ENCODE measurements at regions of chr10 and their contacts with region 1.

Region 1: GRCh38 chr10:96017191-96017687 is 26.1 kb upstream of the CCNJ start:
- DNase-seq: peak; percentile 32
- H3K4me3 Mint-ChIP-seq: no peak overlapping the region
- H3K27ac Mint-ChIP-seq: no peak overlapping the region
- H3K4me1 Mint-ChIP-seq: no peaks in the 10 kb centered on the region
- H3K27me3 Mint-ChIP-seq: peaks cover 4% of the 10 kb centered on the region

Region 2: GRCh38 chr10:95850791-95851190 is 166.4 kb before region 1 on chr10:
- CTCF ChIA-PET with region 1: no interaction called
- POLR2A ChIA-PET with region 1: no interaction called
- DNase-seq: no peak
- H3K4me3 Mint-ChIP-seq: no peak overlapping the region
- H3K27ac Mint-ChIP-seq: no peak overlapping the region
- H3K4me1 Mint-ChIP-seq: peaks cover under 1% of the 10 kb centered on the region
- H3K27me3 Mint-ChIP-seq: peaks cover 9% of the 10 kb centered on the region

Region 3: DNA sequence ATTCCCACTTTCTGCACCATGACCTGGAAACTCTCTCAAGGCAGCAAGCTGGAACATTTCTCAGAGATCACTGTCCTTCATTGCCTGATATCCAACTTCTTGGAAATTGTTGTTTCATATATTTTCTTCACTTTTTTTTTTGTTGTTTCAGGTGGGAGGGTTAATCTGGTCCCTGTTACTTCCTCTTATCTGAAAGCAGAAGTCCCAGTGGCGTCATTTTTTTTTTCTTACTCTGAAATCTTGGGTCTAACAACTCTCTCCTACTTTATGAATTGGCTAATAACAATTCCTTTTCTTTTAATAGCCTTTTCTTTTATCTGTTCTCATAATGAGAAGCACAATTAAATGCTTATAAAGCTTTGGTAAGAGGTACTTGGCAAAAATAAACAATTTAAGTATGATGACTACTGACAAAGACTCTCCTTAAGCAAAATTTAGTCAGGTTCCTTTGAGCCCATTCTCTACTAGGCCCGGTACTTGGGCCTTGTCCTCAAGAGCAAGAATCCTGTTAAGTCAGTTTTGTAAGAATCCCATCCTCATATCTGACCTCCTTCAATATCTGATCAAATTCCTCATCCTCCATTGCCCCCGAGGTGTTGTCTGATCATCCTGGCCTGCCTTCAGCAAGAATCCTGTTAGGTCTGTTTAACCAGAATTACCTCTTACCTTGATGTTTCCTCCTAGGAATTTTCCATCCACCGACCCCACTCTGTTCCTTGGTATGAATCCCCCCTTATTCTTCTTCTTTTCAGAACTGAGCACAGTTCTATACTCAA is 121.0 kb before region 1 on chr10:
- CTCF ChIA-PET with region 1: no interaction called
- POLR2A ChIA-PET with region 1: no interaction called
- DNase-seq: no peak
- H3K4me3 Mint-ChIP-seq: no peak overlapping the region
- H3K27ac Mint-ChIP-seq: no peak overlapping the region
- H3K4me1 Mint-ChIP-seq: no peaks in the 10 kb centered on the region
- H3K27me3 Mint-ChIP-seq: no peaks in the 10 kb centered on the region

Region 4: DNA sequence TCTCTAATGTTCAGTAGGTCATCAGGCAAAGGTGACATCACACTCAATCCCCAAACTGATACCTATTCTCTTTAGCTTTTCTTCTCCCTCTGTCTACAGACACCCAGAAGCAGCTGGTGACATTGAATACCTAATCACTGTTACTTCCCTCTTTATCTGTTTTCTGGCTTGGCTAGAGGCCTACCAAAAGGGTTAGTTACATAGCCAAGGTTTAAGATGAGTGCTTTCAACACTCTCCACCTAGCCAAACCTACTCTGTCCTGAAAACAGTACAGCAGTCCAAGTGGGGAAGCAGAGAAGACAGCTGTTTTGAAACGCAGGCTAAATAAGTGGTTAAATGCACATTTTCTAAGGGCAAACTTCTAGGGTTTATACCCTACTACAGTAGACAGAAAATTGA is 65.5 kb after region 1 on chr10:
- CTCF ChIA-PET with region 1: no interaction called
- POLR2A ChIA-PET with region 1: no interaction called
- DNase-seq: no peak
- H3K4me3 Mint-ChIP-seq: no peak overlapping the region
- H3K27ac Mint-ChIP-seq: no peak overlapping the region
- H3K4me1 Mint-ChIP-seq: peaks cover 14% of the 10 kb centered on the region
- H3K27me3 Mint-ChIP-seq: no peaks in the 10 kb centered on the region

Region 5: GRCh38 chr10:96118604-96119450 is 101.6 kb after region 1 on chr10:
- CTCF ChIA-PET with region 1: no interaction called
- POLR2A ChIA-PET with region 1: no interaction called
- DNase-seq: no peak
- H3K4me3 Mint-ChIP-seq: no peak overlapping the region
- H3K27ac Mint-ChIP-seq: no peak overlapping the region
- H3K4me1 Mint-ChIP-seq: peaks cover 3% of the 10 kb centered on the region
- H3K27me3 Mint-ChIP-seq: peaks cover 48% of the 10 kb centered on the region

Region 6: DNA sequence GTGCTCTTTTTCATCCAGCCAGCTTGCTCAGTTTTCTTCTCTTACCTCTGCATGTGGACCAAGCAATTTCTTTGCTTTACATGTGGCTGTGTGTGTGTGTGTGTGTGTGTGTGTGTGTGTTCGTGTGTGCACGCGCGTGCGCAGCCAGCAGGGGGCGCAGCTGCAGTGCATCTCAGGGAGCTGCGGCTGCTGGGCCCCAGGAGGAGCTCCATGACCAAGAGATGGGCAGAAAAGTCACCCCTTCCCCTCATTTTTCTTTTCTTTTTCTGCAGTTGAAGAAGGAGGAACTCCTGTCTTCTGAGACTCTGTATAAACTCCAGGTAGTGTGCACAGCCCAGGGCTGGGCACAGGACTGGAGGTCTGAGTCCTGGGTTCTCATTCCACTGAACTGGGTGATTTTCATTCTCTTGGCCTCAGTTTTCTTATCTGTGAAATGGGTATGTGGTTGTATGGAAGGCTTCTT is 212.4 kb after region 1 on chr10:
- CTCF ChIA-PET with region 1: interaction called, 13 read pairs
- POLR2A ChIA-PET with region 1: no interaction called
- DNase-seq: peak; percentile 71
- H3K4me3 Mint-ChIP-seq: no peak overlapping the region
- H3K27ac Mint-ChIP-seq: no peak overlapping the region
- H3K4me1 Mint-ChIP-seq: no peaks in the 10 kb centered on the region
- H3K27me3 Mint-ChIP-seq: peaks cover 4% of the 10 kb centered on the region

Region 7: DNA sequence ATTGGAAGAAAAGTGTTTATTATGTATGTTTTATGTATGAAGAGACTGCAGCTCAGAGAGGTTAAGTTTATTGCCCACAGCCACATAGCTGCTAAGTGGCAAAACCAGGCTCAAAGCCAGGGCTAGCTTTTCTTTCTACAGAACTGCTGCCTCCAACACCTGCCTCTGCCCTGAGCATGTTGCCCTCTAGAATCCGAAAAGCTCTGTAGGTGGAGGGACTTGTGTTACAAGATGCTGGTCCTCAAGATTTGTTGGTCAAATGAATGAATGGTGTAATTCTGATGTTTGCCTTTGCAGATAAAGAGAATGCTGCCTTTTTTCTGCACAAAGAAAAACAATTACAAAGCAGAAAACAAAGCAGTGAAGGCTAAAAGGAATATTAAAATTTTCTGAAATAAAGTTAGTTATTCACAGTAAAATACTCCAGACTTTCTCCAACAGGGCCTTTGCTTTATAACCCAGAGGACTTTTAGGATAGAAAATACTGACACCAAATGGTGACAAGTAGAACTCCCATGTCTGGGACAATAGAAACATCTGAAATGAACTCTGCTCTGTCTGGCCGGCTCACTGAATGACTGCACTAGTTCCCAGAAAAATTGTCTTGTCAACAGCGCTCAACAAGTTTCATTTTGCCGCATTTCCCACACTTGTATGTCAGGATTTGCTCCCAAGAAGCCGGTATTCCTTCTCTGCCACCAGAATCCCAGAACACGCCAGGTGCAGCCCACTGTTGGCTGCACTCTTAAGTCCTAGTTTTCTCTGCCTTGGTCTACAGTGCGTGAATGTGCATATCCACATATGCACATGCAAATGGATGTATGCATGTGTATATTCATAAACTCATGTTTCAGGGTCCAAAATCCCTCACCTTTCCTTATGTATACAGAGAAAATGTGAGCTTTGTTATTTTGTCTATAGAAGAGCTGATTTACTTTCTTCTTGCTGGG is 276.0 kb after region 1 on chr10:
- CTCF ChIA-PET with region 1: interaction called, 16 read pairs
- POLR2A ChIA-PET with region 1: no interaction called
- DNase-seq: no peak
- H3K4me3 Mint-ChIP-seq: no peak overlapping the region
- H3K27ac Mint-ChIP-seq: no peak overlapping the region
- H3K4me1 Mint-ChIP-seq: peaks cover 8% of the 10 kb centered on the region
- H3K27me3 Mint-ChIP-seq: peaks cover 44% of the 10 kb centered on the region

Region 8: GRCh38 chr10:96334616-96335526 is 317.6 kb after region 1 on chr10:
- CTCF ChIA-PET with region 1: interaction called, 11 read pairs
- POLR2A ChIA-PET with region 1: no interaction called
- DNase-seq: no peak
- H3K4me3 Mint-ChIP-seq: no peak overlapping the region
- H3K27ac Mint-ChIP-seq: no peak overlapping the region
- H3K4me1 Mint-ChIP-seq: peaks cover 2% of the 10 kb centered on the region
- H3K27me3 Mint-ChIP-seq: peaks cover 35% of the 10 kb centered on the region

Region 9: GRCh38 chr10:96339957-96340904 is 323.0 kb after region 1 on chr10:
- CTCF ChIA-PET with region 1: interaction called, 13 read pairs
- POLR2A ChIA-PET with region 1: no interaction called
- DNase-seq: peak; percentile 57
- H3K4me3 Mint-ChIP-seq: no peak overlapping the region
- H3K27ac Mint-ChIP-seq: no peak overlapping the region
- H3K4me1 Mint-ChIP-seq: peaks cover 3% of the 10 kb centered on the region
- H3K27me3 Mint-ChIP-seq: peaks cover 12% of the 10 kb centered on the region

Region 10: GRCh38 chr10:96374985-96375830 is 358.0 kb after region 1 on chr10:
- CTCF ChIA-PET with region 1: interaction called, 12 read pairs
- POLR2A ChIA-PET with region 1: no interaction called
- DNase-seq: peak; percentile 76
- H3K4me3 Mint-ChIP-seq: peak overlapping the region; percentile 59
- H3K27ac Mint-ChIP-seq: no peak overlapping the region
- H3K4me1 Mint-ChIP-seq: peaks cover 14% of the 10 kb centered on the region
- H3K27me3 Mint-ChIP-seq: peaks cover 29% of the 10 kb centered on the region